Activated CD4-positive, alpha-beta memory T cell treated with anti-CD3 and anti-CD28 coated beads for 36 hours (primary cell): ENCODE measurements at regions of chr17 and their contacts with region 1.

Region 1: GRCh38 chr17:60641810-60642220 is 35.8 kb upstream of the BCAS3 start:
- DNase-seq: peak; percentile 64
- H3K4me3 Mint-ChIP-seq: no peak overlapping the region
- H3K27ac Mint-ChIP-seq: no peak overlapping the region
- H3K4me1 Mint-ChIP-seq: peaks cover 9% of the 10 kb centered on the region
- H3K27me3 Mint-ChIP-seq: no peaks in the 10 kb centered on the region

Region 2: GRCh38 chr17:60421273-60421934 is 220.4 kb before region 1 on chr17:
- CTCF ChIA-PET with region 1: interaction called, 3 read pairs
- POLR2A ChIA-PET with region 1: no interaction called
- intact Hi-C with region 1: loop called (anchors 5 kb)
- DNase-seq: peak; percentile 86
- H3K4me3 Mint-ChIP-seq: peak overlapping the region; percentile 64
- H3K27ac Mint-ChIP-seq: no peak overlapping the region
- H3K4me1 Mint-ChIP-seq: peaks cover 8% of the 10 kb centered on the region
- H3K27me3 Mint-ChIP-seq: peaks cover 2% of the 10 kb centered on the region

Region 3: GRCh38 chr17:60506312-60506711 is 135.5 kb before region 1 on chr17:
- CTCF ChIA-PET with region 1: no interaction called
- POLR2A ChIA-PET with region 1: no interaction called
- intact Hi-C with region 1: no loop called
- DNase-seq: no peak
- H3K4me3 Mint-ChIP-seq: no peak overlapping the region
- H3K27ac Mint-ChIP-seq: peak overlapping the region; percentile 6
- H3K4me1 Mint-ChIP-seq: peaks cover 19% of the 10 kb centered on the region
- H3K27me3 Mint-ChIP-seq: no peaks in the 10 kb centered on the region

Region 4: GRCh38 chr17:60577147-60577915 is 64.5 kb before region 1 on chr17:
- CTCF ChIA-PET with region 1: interaction called, 13 read pairs
- POLR2A ChIA-PET with region 1: no interaction called
- intact Hi-C with region 1: loop called (anchors 1 kb)
- DNase-seq: no peak
- H3K4me3 Mint-ChIP-seq: peak overlapping the region; percentile 64
- H3K27ac Mint-ChIP-seq: no peak overlapping the region
- H3K4me1 Mint-ChIP-seq: peaks cover 4% of the 10 kb centered on the region
- H3K27me3 Mint-ChIP-seq: no peaks in the 10 kb centered on the region

Region 5: DNA sequence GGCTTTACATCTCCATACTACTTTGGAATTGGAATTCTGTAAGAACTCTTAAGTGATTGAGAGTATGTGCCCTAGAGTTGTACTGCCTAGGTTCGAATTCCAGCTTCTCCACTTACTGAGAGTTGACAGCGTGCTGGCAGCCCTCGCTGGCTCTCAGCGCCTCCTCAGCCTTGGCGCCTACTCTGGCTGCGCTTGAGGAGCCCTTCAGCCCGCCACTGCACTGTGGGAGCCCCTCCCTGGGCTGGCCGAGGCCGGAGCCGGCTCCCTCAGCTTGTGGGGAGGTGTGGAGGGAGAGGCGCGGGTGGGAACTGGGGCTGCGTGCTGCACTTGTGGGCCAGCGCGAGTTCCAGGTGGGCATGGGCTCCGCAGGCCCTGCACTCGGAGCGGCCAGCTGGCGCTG is 28.5 kb before region 1 on chr17:
- CTCF ChIA-PET with region 1: interaction called, 11 read pairs
- POLR2A ChIA-PET with region 1: no interaction called
- intact Hi-C with region 1: no loop called
- DNase-seq: no peak
- H3K4me3 Mint-ChIP-seq: no peak overlapping the region
- H3K27ac Mint-ChIP-seq: no peak overlapping the region
- H3K4me1 Mint-ChIP-seq: peaks cover 13% of the 10 kb centered on the region
- H3K27me3 Mint-ChIP-seq: no peaks in the 10 kb centered on the region

Region 6: GRCh38 chr17:60652454-60653247 is 10.8 kb after region 1 on chr17:
- CTCF ChIA-PET with region 1: interaction called, 15 read pairs
- POLR2A ChIA-PET with region 1: no interaction called
- intact Hi-C with region 1: no loop called
- DNase-seq: no peak
- H3K4me3 Mint-ChIP-seq: no peak overlapping the region
- H3K27ac Mint-ChIP-seq: no peak overlapping the region
- H3K4me1 Mint-ChIP-seq: peaks cover 26% of the 10 kb centered on the region
- H3K27me3 Mint-ChIP-seq: no peaks in the 10 kb centered on the region